ENCODE measurements at regions of chr19 and their contacts with region 1.

Region 1: DNA sequence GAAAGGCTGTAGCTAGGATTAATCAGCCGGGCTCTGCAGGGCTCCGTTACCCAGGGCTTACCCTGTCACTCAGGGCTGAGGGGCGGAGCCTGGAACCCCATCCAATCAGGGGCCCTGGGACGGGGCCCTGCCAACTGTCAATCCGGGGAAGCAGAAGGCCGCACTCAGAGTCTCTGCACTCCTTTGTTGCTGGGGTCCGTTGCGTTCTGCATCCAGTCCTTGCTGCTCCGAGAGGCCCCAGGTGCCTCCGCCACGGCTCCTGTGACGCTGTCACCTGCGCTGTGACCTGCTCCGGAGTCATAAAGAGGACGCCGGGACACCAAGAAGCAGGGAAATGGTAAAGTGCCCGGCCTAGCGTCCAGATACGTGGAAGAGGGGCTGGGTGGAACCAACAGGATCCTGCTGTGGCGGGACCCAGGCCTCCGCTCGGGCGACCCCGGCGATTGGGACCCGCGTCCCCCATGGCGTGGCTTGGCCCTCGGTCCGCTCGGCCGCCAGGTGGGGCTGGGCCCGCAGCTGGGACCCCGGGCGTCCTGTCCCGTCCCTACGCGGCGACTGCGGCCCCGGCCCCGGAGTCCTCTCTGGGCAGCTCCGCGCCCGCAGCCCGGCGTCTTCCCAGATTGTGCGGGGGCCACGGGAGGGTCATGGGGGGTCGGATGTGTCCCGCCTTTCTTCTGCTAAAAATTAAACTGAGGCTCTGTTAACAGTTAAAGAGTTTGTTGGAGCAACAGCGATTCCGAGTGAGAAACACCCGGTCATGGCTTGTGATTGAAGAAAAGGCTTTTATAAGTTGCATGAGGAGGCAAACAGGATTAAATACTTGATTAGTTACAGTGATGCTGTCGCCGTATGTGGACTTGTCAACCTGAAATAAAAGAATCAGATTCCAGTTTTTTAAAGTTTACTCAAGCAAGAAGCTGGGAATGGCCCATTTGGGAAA is at the start of gene ZNF491:
- DNase-seq: peak; percentile 96
- H3K4me3 ChIP-seq: peak within 1 kb of the TSS; percentile 62
- H3K27ac ChIP-seq: peak within 1 kb of the TSS; percentile 80
- H3K4me1 ChIP-seq: peaks cover 8% of the 10 kb centered on the region
- H3K27me3 ChIP-seq: no peaks in the 10 kb centered on the region
- CTCF ChIP-seq: no peak
- total RNA-seq, gene ZNF491: 0.60 and 1.7 TPM in 2 replicates

Region 2: DNA sequence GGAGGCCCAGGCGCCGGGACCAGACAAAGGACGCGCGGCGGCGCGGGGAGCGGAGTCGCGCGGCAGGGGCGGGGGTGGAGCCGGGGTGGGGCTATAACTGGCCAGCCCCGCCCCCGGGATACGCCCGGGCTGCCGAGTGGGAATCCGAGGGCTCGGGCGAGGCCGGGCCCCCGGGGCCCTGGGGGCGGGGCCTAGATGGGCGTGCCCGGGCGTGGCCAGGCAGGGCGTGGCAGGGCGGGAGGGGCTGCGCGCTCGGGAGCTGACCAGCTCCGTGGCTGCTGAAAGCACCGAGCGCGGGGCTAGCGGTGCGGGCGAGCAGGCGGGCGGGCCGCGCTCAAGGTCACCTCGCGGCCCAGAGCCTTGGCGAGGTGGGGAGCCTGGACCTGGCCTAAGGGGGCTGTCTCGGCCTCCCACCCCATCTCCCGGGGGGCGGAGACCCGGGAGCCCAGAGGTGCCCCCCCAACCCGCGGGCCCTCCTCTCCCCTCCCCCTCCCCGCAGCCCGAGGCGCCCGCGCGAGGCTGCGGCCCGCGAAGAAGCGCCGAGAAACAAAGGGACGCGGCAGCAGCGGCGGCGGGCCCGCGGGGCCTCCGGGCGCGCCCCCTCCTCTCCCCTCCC is 319.1 kb before region 1 on chr19:
- CTCF ChIA-PET with region 1: no interaction called
- POLR2A ChIA-PET with region 1: no interaction called
- intact Hi-C with region 1: no loop called
- DNase-seq: peak; percentile 63
- H3K4me3 ChIP-seq: peak overlapping the region; percentile 44
- H3K27ac ChIP-seq: no peak overlapping the region
- H3K4me1 ChIP-seq: peaks cover 21% of the 10 kb centered on the region
- H3K27me3 ChIP-seq: peaks cover 21% of the 10 kb centered on the region
- CTCF ChIP-seq: no peak

Region 3: GRCh38 chr19:11814029-11814699 is 15.5 kb after region 1 on chr19 and contains the start of gene ZNF440:
- CTCF ChIA-PET with region 1: interaction called, 6 read pairs
- POLR2A ChIA-PET with region 1: no interaction called
- intact Hi-C with region 1: loop called (anchors 1 kb)
- DNase-seq: peak; percentile 89
- H3K4me3 ChIP-seq: peak within 1 kb of the TSS; percentile 89
- H3K27ac ChIP-seq: peak within 1 kb of the TSS; percentile 67
- H3K4me1 ChIP-seq: no peaks in the 10 kb centered on the region
- H3K27me3 ChIP-seq: no peaks in the 10 kb centered on the region
- CTCF ChIP-seq: no peak
- total RNA-seq, gene ZNF440: 7.1 and 9.2 TPM in 2 replicates

Region 4: DNA sequence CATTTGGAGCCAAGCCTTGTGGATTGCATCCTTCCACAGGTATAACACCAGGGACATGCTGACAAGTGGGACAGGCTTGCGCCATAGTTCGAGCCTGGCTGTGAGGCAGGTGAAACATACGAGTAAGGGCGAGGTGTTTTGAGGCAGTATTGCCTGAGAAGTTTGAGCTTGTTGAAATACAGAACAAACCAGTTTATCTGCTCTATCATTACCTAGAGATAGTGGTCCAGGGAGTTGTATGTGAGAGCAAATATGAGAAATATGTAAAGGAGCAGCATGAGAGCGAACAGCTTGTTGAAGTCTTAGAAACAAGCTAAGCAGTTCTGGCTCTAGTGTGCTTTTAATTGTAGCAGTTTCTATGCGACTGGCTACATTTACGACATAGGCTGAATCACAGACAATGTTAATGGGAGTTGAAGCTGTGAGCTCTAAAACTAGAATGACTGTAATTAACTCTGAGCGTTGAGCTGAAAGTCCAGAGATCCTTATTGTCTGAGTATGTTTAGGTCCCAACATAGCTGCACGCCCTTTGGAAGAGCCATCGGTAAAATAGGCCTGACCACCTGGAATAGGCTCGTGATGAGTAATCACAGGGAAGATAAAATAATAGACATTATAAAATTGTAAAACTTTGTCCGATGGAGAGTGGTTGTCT is 58.1 kb after region 1 on chr19:
- CTCF ChIA-PET with region 1: interaction called, 16 read pairs
- POLR2A ChIA-PET with region 1: no interaction called
- intact Hi-C with region 1: loop called (anchors 5 kb)
- DNase-seq: no peak
- H3K4me3 ChIP-seq: no peak overlapping the region
- H3K27ac ChIP-seq: no peak overlapping the region
- H3K4me1 ChIP-seq: no peaks in the 10 kb centered on the region
- H3K27me3 ChIP-seq: no peaks in the 10 kb centered on the region
- CTCF ChIP-seq: no peak

Region 5: DNA sequence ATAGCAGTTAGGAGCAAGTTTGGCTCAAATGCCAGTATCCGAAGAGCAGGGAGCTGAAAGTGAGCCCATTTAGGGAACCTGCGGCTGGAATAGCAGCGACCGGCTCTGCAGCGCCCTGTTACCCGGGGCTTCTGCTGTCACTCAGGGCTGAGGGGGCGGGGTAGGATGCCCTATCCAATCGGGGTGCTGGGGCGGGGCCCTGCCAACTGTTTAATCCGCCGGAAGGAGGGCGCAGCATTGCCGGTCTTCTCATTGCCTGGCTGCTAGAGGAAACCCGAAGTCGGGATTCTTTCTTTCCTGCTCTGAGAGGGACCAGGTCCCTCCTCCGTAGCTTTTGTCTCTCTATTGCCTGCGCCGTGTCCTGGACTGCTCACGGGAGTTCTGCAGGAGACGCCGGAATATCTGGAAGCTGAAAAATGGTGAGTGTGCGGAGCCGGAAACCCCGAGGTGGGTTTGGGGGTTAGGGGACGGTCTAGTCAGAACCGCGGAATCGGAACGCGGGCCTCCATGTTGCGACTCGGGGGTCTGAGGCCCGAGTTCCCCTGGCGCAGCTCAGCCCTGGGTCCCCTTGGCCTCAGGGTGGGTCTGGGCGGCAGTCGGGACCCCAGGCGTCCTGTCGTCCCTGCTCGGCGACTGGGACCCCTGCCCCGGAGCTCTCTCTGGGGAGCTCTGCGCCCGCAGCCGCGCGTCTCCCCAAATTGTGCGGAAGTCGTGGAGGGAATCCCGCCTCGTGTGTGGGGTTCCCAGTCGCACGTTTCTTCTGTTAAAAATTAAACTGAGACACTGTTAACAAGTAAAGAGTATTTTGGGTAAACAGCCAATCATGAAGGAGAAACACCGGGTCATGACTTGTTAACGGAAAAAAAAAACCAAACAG is 189.0 kb after region 1 on chr19:
- CTCF ChIA-PET with region 1: interaction called, 4 read pairs
- POLR2A ChIA-PET with region 1: no interaction called
- intact Hi-C with region 1: loop called (anchors 5 kb)
- DNase-seq: peak; percentile 98
- H3K4me3 ChIP-seq: peak overlapping the region; percentile 65
- H3K27ac ChIP-seq: peak overlapping the region; percentile 77
- H3K4me1 ChIP-seq: no peaks in the 10 kb centered on the region
- H3K27me3 ChIP-seq: no peaks in the 10 kb centered on the region
- CTCF ChIP-seq: no peak

Region 6: GRCh38 chr19:12544401-12544876 is 745.8 kb after region 1 on chr19:
- CTCF ChIA-PET with region 1: interaction called, 10 read pairs
- POLR2A ChIA-PET with region 1: no interaction called
- intact Hi-C with region 1: no loop called
- DNase-seq: no peak
- H3K4me3 ChIP-seq: no peak overlapping the region
- H3K27ac ChIP-seq: no peak overlapping the region
- H3K4me1 ChIP-seq: no peaks in the 10 kb centered on the region
- H3K27me3 ChIP-seq: no peaks in the 10 kb centered on the region
- CTCF ChIP-seq: no peak